HCT116 (cell line): ENCODE measurements at regions of chr5 and their contacts with region 1.

Region 1: DNA sequence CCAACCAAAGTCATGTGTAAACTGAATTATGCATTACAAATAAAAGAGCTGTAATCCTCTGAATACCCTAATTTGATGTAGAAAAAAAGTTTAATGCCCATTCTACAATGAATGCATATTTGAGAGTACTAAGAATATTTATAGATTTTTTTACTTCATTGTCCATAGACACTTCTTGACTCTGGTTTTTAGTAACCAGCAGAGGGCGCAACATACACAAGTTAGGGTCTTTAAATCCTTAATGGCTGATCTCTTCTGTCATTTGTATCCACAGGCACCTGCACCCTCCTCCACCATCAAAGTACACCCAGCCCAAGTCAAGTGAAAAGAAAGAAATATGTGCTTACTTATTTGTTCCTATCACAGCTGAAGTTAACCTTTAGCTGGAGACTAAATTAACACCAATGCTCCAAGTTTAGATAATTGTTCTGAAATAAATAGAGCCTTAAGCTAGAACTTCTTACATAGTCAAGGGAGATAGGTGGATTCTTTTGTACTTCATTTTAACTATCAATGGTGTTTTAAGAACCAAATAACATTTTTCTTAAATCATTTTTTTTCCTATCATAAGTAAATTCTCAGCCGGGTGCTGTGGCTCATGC is 524.2 kb upstream of the DAB2 start:
- DNase-seq: peak; percentile 69
- ATAC-seq: peak; percentile 87
- H3K4me3 ChIP-seq: no peak overlapping the region
- H3K27ac ChIP-seq: no peak overlapping the region
- H3K4me1 ChIP-seq: no peaks in the 10 kb centered on the region
- H3K27me3 ChIP-seq: no peaks in the 10 kb centered on the region
- CTCF ChIP-seq: peak; percentile 52 to 74 (median 58); a peak in 5 of 6 replicates
- POLR2A ChIP-seq: no peak
- RAD21 ChIP-seq: peak; percentile 76

Region 2: GRCh38 chr5:39714036-39714698 is 234.8 kb before region 1 on chr5:
- CTCF ChIA-PET with region 1: no interaction called
- POLR2A ChIA-PET with region 1: no interaction called
- RAD21 ChIA-PET with region 1: no interaction called
- intact Hi-C with region 1: loop called (anchors 5 kb)
- DNase-seq: peak; percentile 69
- ATAC-seq: peak; percentile 76
- H3K4me3 ChIP-seq: no peak overlapping the region
- H3K27ac ChIP-seq: no peak overlapping the region
- H3K4me1 ChIP-seq: no peaks in the 10 kb centered on the region; a peak in 1 of 4 replicates
- H3K27me3 ChIP-seq: no peaks in the 10 kb centered on the region
- CTCF ChIP-seq: peak; percentile 53 to 69 (median 65)
- POLR2A ChIP-seq: no peak
- RAD21 ChIP-seq: peak; percentile 80